ENCODE measurements at regions of chrX and their contacts with region 1.

Region 1: GRCh38 chrX:13110433-13111324 is 66.3 kb upstream of the FAM9C start:
- DNase-seq: peak; percentile 62 to 99
- ATAC-seq: peak; percentile 96
- H3K4me3 ChIP-seq: no peak overlapping the region
- H3K27ac ChIP-seq: peak overlapping the region; percentile 93 to 95
- H3K4me1 ChIP-seq: peaks cover 47% of the 10 kb centered on the region
- CTCF ChIP-seq: no peak
- EP300 ChIP-seq: peak; percentile 95 to 97; a peak in 4 of 5 replicates
- POLR2A ChIP-seq: no peak
- RAD21 ChIP-seq: peak; percentile 43 to 80

Region 2: GRCh38 chrX:12974796-12975669 is 135.6 kb before region 1 on chrX and contains the start of gene TMSB4X:
- CTCF ChIA-PET with region 1: no interaction called
- POLR2A ChIA-PET with region 1: interaction called, 39 read pairs
- DNase-seq: peak; percentile 69 to 93
- ATAC-seq: peak; percentile 83 to 84
- H3K4me3 ChIP-seq: peak within 1 kb of the TSS; percentile 94
- H3K27ac ChIP-seq: peak within 1 kb of the TSS; percentile 97 to 99
- H3K4me1 ChIP-seq: peaks cover 37% of the 10 kb centered on the region
- CTCF ChIP-seq: no peak
- EP300 ChIP-seq: no peak
- POLR2A ChIP-seq: peak; percentile 99
- RAD21 ChIP-seq: peak; percentile 4 to 31; a peak in 2 of 5 replicates
- polyA plus RNA-seq, gene TMSB4X: 3,130 and 3,742 TPM in 2 replicates

Region 3: GRCh38 chrX:13078739-13079444 is 31.8 kb before region 1 on chrX:
- CTCF ChIA-PET with region 1: no interaction called
- POLR2A ChIA-PET with region 1: no interaction called
- DNase-seq: no peak
- ATAC-seq: no peak
- H3K4me3 ChIP-seq: no peak overlapping the region
- H3K27ac ChIP-seq: peak overlapping the region in 1 of 2 experiments; percentile 63; a peak in 3 of 6 replicates
- H3K4me1 ChIP-seq: peaks cover 16% of the 10 kb centered on the region
- CTCF ChIP-seq: no peak
- EP300 ChIP-seq: no peak
- POLR2A ChIP-seq: no peak
- RAD21 ChIP-seq: no peak

Region 4: DNA sequence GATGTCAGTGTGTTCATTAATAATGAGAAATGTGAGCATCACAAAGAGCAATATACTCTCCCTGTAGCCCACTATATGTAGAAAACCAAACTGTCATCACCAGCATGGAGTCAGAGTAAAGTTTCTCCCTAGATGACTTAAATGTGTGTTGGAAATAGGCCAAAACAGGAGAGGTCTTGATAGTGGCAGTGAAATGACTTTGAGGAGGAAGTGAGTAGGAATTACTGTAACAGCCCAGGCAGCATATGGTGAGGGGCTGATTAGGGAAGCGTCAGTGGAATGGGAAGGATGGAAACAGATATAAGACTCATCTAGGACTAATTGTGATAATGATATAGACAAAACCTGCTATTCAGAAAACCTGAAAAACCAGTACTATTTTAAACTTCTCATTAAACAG is 125.3 kb after region 1 on chrX:
- CTCF ChIA-PET with region 1: no interaction called
- POLR2A ChIA-PET with region 1: interaction called, 15 read pairs
- DNase-seq: no peak
- ATAC-seq: no peak
- H3K4me3 ChIP-seq: no peak overlapping the region
- H3K27ac ChIP-seq: no peak overlapping the region
- H3K4me1 ChIP-seq: no peaks in the 10 kb centered on the region
- CTCF ChIP-seq: no peak
- EP300 ChIP-seq: no peak
- POLR2A ChIP-seq: no peak
- RAD21 ChIP-seq: no peak

Measured in A549 (cell line).